GM18951 (cell line): ENCODE measurements at regions of chr7 and their contacts with region 1.

Region 1: GRCh38 chr7:30800785-30801252 is 29.6 kb downstream of the MINDY4 start:
- POLR2A ChIP-seq: no peak

Region 2: GRCh38 chr7:30863706-30864035 is 62.9 kb after region 1 on chr7:
- in situ Hi-C with region 1: no loop called
- POLR2A ChIP-seq: no peak

Region 3: DNA sequence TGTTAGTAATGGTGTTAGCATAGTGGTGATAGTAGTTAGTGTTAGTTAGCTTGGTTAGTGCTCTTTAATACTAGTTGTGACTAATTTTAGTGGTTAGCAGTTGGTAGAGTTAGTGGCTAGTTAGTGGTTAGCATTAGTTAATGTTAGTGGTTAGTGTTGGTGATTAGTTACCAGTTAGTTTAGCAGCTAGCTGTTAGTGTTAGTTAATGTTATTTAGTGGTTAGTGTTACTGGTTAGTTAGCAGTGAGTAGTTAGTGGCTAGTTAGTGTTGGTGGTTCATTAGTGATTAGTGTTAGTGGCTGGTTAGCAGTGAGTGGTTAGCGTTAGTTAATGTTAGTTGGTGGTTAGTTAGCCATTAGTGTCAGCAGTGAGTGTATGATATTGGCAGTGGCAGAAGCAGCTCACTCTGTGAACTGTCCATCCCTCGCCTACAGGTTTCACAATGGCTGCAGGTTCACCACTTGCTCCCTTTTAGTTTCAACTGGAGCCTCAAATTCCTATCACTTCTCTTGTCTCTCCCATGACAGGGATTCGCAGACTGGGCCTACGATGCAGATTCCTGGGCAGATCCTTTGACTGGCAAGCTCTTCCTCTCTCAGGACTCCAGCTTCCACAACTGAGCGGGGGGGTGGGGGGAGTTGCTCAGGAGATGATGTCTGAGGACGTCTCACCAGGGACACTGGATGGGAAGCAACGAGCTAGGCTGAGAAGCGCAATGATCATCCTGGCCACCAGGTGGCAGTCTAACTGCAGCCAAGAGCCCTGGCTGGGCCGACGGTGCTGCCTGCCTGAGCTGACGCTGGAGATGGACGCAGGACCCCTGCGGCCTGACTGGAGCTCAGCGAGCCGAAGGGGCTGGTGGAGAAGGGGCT is 182.5 kb after region 1 on chr7:
- in situ Hi-C with region 1: loop called (anchors 5 kb)
- POLR2A ChIP-seq: no peak

Region 4: GRCh38 chr7:31114593-31115343 is 313.9 kb after region 1 on chr7:
- in situ Hi-C with region 1: loop called (anchors 5 kb)
- POLR2A ChIP-seq: no peak

Region 5: GRCh38 chr7:31251441-31251840 is 450.6 kb after region 1 on chr7:
- in situ Hi-C with region 1: no loop called
- POLR2A ChIP-seq: no peak

Region 6: DNA sequence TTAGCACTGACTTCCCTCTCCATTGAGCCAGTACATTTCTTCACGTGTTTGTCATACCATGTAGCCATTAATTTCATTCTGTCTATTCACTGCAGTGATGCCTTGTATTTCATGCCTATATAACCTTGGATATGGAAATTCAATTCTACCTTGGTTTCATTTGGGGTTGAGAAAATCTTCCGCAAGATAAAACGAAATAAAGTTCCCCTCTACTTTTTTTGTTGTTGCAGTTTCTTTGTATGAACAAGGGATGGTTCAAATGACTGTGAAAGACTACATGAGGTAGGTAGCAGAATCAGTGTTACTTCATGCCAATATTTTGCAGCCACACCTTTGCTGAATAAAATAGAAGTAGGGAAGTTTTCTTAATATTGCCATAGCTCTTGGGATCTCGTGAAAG is 768.7 kb after region 1 on chr7:
- in situ Hi-C with region 1: no loop called
- POLR2A ChIP-seq: no peak